ENCODE measurements at regions of chr11 and their contacts with region 1.

Region 1: DNA sequence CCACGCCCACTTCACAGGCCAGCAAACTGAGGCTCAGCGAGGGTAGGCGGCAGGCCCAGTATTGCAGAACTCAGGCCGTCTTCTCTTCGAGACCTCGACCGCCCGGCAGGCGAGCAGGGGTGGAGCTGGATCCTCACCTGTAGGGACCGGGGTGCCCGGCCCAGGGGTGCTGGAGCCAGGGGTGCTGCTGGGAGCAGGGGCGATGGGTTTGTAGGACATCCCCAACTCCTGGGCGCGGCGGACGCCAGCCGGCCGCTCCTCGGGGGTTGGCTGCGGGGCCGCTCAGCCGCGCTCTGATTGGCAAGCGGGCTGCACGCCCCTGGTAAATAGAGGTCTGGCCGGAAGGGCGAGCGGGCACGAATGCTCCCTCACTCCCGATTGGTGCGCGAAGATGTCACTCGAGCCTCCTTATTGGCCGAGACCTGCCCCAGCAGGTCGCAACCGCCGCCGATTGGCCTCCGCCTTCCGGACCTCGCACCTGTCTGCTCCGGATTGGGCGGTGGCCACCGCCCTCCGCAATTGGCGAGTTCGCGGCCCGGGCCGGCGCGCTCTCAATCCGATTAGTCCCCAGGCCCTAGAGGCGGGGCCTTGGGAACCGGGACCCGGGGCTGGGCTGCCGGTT is at the start of gene CDK2AP2:
- DNase-seq: peak; percentile 100
- ATAC-seq: peak; percentile 64 to 86 (median 79)
- H3K4me3 ChIP-seq: peak within 1 kb of the TSS; percentile 58 to 87 (median 78)
- H3K27ac ChIP-seq: peak within 1 kb of the TSS; percentile 87 to 98 (median 98)
- H3K4me1 ChIP-seq: peaks cover 0 to 34% (median 8%) of the 10 kb centered on the region in 4 donors
- H3K27me3 ChIP-seq: no peaks in the 10 kb centered on the region
- CTCF ChIP-seq: no peak
- POLR2A ChIP-seq: peak; percentile 95
- total RNA-seq, gene CDK2AP2: 45.2 to 74.9 (median 55.7) TPM

Region 2: DNA sequence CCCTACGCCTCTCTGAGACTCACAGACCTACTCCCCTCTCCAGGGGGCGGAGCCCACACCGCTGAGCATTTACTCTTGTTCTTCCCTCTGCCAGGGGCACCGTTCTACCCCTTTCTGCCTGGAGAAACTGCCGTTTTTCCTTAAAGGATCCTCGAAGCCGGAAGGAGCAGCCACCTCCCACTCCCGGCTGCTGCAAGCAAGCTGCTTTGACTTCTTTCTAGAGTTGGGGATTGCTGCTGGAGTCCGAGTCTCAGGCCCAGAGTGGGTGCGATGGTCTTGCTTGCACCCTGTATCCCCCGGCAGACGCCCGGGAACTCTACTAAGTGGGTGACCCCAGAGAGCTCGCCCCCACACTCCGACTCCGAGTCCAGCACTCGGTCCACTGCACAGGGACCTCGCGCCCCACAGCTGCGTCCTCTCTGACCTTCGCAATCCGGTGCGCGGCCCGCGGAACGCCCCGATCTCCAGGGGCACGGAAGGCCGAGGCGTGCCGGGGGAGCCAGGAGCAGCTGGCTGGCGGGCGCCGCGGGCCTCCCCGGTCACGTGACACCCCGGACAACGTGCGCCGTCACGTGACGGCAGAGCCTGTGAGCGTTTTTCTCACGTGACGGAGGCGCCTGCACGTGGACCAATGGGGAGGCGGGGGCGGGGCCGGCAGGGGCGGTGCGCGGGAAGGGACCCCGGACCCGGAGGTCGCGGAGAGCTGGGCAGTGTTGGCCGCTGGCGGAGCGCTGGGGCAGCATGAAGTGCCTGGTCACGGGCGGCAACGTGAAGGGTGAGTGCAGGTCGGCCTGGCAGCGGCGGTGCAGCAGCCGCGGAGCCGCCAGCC is 116.5 kb before region 1 on chr11 and contains the start of gene RAD9A:
- intact Hi-C with region 1: loop called (anchors 5 to 10 kb)
- DNase-seq: peak; percentile 97
- ATAC-seq: peak; percentile 80 to 93 (median 88)
- H3K4me3 ChIP-seq: peak within 1 kb of the TSS; percentile 74 to 92 (median 84)
- H3K27ac ChIP-seq: peak within 1 kb of the TSS; percentile 49 to 79 (median 68)
- H3K4me1 ChIP-seq: peaks cover 0 to 12% (median 0%) of the 10 kb centered on the region in 4 donors
- H3K27me3 ChIP-seq: no peaks in the 10 kb centered on the region
- CTCF ChIP-seq: no peak
- POLR2A ChIP-seq: peak; percentile 63
- total RNA-seq, gene RAD9A: 5.3 to 13.2 (median 6.2) TPM

Region 3: DNA sequence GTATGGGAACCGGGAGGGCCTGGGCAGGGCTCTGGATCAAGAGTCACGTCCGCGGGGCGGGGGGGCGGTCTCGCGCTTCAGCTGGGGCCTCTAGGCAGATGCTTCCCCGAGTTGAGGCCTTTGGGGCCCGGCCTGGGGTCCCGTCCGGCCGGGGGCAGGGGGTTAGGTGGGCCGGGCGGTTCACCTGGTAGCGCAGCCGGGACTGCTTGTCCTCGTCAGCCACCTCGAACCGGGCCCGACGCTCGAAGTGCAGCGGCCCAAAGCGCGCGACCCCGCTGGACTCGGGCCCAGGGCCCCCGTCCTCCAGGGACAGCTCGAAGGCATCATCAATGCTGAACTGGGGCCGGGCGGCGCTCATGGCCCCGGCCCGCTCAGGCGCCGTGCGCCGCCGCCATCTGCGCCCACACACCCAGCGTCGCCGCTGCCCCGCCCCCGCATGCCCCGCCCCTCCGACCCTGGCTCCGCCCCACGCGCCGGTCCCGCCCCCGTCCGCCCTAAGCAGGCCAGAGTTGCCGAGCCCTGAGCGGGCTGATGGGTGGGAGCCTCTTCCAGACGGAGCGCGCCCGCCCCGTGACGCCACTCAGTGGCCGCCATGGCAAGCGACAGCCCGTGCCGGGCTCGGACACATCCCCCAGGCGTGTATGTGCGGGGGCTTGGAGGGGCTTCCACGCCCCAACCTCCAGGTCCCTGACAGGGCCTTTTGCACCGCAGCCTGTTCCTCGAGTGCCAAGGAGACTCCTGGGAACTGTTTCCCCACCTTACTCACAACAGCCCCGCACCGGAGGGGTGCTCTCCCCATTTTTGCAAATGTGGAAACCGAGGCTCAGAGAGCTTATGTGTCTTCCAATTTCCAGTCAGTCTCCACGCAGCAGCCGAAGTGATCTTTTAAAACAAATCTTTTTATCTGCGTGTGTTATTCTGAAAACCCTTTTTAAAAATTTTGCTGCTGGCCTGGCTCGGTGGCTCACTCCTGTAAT is 38.9 kb before region 1 on chr11 and contains the start of gene TMEM134:
- intact Hi-C with region 1: loop called in 1 of 2 experiments (anchors 5 kb)
- DNase-seq: peak; percentile 95 to 96 (median 95)
- ATAC-seq: peak; percentile 74 to 87 (median 82)
- H3K4me3 ChIP-seq: peak within 1 kb of the TSS; percentile 90 to 96 (median 95)
- H3K27ac ChIP-seq: peak within 1 kb of the TSS; percentile 62 to 87 (median 85)
- H3K4me1 ChIP-seq: peaks cover 0 to 40% (median 14%) of the 10 kb centered on the region in 4 donors
- H3K27me3 ChIP-seq: no peaks in the 10 kb centered on the region
- CTCF ChIP-seq: peak; percentile 42 to 52 (median 44)
- POLR2A ChIP-seq: peak; percentile 80
- total RNA-seq, gene TMEM134: 29.1 to 133 (median 40.9) TPM

Measured in right lobe of liver (tissue), 6 donors.